Activated T-helper 2 cell treated with anti-CD3 and anti-CD28 coated beads, Interferon-gamma antibody, Interleukin-2, Interleukin-4, amounts not matched to agents 10 μg/mL and 5 μg/mL and 100 μg/mL, durations not matched to agents 14 hours and 24 hours and 36 hours (primary cell): ENCODE measurements at regions of chr5 and their contacts with region 1.

Region 1: DNA sequence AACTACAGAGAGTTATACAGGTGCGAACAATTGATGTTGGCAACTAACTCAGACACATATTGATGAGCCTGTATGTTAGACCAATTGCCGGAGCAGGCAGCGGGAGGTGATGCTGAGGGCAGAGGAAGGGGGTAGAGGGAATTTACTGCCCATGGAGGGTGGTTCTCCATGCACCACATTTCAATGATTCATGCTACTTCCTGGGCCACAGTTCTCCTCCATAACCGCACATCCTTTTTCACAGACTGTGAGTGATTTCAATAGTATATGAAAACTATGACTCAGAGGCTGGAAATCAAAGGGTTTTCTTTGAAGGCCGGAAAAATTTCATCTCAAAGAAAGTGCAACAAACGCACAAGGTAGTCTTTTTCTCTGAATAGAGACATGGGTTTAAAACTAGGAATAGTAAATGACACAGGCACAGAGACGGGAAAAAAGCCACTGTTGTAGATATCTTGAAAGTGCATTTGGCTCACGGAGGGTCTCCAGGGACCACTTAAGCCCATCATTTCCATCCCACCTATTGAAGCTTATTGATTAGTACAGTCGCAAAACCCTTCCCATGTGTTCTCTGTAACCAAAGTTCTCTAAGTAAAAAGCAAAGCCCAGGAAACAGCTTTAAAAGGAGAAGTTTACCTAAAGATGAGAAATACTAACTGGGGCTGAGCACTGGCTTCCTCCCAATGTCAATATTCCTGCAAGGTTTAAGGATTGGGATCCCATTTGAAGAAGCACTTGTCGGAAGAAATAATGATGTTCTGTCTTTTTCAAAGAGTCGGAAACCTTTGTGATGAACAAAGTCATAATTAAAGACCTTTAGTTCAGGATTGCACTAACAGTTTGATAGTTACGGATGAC is 28.0 kb upstream of the ADAM19 start:
- DNase-seq: peak; percentile 75
- H3K4me3 Mint-ChIP-seq: peak overlapping the region; percentile 52
- H3K27ac Mint-ChIP-seq: peak overlapping the region; percentile 80
- H3K4me1 Mint-ChIP-seq: peaks cover 79% of the 10 kb centered on the region
- H3K27me3 Mint-ChIP-seq: no peaks in the 10 kb centered on the region

Region 2: GRCh38 chr5:157172403-157172802 is 431.2 kb before region 1 on chr5:
- intact Hi-C with region 1: loop called (anchors 5 kb)
- DNase-seq: peak; percentile 78
- H3K4me3 Mint-ChIP-seq: peak overlapping the region; percentile 73
- H3K27ac Mint-ChIP-seq: peak overlapping the region; percentile 98
- H3K4me1 Mint-ChIP-seq: peaks cover 72% of the 10 kb centered on the region
- H3K27me3 Mint-ChIP-seq: no peaks in the 10 kb centered on the region

Region 3: GRCh38 chr5:157548513-157549297 is 54.9 kb before region 1 on chr5:
- intact Hi-C with region 1: no loop called
- DNase-seq: no peak
- H3K4me3 Mint-ChIP-seq: peak overlapping the region; percentile 66
- H3K27ac Mint-ChIP-seq: peak overlapping the region; percentile 78
- H3K4me1 Mint-ChIP-seq: peaks cover 82% of the 10 kb centered on the region
- H3K27me3 Mint-ChIP-seq: no peaks in the 10 kb centered on the region

Region 4: DNA sequence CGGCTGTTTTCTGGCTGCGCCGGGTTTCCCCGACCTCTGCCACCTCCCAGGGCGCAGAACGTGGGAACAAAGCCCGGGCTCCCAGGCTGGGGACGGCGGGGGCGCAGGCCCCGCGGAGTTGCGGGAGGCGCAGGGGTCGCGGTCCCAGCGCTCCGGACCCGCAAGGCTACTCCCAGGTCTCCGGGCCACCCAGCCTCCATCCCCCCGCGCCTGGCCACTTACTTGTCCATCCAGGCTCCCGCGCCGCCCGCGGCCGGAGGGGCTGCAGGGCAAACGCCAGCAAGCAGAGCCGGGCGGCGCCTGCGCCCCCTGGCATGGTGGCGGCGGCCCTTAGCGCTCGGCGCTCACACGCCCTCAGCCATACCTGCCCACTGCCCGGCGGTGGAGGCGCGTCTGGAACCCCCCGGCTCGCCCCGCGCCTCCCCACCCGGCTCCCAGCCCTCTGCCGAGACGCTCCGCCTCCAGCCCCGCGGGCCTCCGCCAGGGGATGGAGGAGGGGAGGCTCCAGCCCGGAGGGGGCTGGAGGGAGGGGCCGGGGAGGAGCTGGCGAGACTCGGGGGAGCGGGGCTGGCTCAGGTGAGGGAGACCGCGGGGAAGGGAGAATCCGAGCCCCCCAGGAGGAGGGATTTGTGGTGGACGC is 28.1 kb before region 1 on chr5 and contains the start of gene ADAM19:
- intact Hi-C with region 1: loop called (anchors 1 kb)
- DNase-seq: peak; percentile 43
- H3K4me3 Mint-ChIP-seq: peak within 1 kb of the TSS; percentile 94
- H3K27ac Mint-ChIP-seq: peak within 1 kb of the TSS; percentile 84
- H3K4me1 Mint-ChIP-seq: peaks cover 62% of the 10 kb centered on the region
- H3K27me3 Mint-ChIP-seq: no peaks in the 10 kb centered on the region
- total RNA-seq, gene ADAM19: 229 and 237 TPM in 2 replicates

Region 5: GRCh38 chr5:157670662-157671591 is 67.4 kb after region 1 on chr5 and contains the start of gene C5orf52:
- intact Hi-C with region 1: loop called (anchors 2 kb)
- DNase-seq: no peak
- H3K4me3 Mint-ChIP-seq: peak within 1 kb of the TSS; percentile 90
- H3K27ac Mint-ChIP-seq: peak within 1 kb of the TSS; percentile 74
- H3K4me1 Mint-ChIP-seq: peaks cover 28% of the 10 kb centered on the region
- H3K27me3 Mint-ChIP-seq: peaks cover 8% of the 10 kb centered on the region
- total RNA-seq, gene C5orf52: 0.30 TPM in 1 of 2 replicates, not detected in the other

Region 6: DNA sequence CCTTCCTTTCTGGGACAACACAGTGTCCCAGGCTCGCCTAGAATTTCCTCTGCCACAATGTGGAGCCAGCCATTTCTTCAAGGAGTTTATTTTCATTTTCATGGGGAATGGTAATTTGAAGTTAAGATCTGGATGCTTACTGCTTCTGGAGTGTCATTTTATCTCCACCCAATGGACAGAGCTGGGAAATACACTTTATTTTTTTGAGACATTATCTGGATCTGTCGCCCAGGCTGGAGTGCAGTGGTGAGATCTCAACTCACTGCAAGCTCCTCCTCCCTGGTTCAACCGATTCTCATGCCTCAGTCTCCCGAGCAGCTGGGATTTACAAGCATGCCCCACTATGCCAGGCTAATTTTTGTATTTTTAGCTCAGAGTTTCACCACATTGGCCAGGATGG is 115.0 kb after region 1 on chr5:
- intact Hi-C with region 1: loop called (anchors 5 kb)
- DNase-seq: no peak
- H3K4me3 Mint-ChIP-seq: no peak overlapping the region
- H3K27ac Mint-ChIP-seq: peak overlapping the region; percentile 67
- H3K4me1 Mint-ChIP-seq: peaks cover 33% of the 10 kb centered on the region
- H3K27me3 Mint-ChIP-seq: no peaks in the 10 kb centered on the region

Region 7: DNA sequence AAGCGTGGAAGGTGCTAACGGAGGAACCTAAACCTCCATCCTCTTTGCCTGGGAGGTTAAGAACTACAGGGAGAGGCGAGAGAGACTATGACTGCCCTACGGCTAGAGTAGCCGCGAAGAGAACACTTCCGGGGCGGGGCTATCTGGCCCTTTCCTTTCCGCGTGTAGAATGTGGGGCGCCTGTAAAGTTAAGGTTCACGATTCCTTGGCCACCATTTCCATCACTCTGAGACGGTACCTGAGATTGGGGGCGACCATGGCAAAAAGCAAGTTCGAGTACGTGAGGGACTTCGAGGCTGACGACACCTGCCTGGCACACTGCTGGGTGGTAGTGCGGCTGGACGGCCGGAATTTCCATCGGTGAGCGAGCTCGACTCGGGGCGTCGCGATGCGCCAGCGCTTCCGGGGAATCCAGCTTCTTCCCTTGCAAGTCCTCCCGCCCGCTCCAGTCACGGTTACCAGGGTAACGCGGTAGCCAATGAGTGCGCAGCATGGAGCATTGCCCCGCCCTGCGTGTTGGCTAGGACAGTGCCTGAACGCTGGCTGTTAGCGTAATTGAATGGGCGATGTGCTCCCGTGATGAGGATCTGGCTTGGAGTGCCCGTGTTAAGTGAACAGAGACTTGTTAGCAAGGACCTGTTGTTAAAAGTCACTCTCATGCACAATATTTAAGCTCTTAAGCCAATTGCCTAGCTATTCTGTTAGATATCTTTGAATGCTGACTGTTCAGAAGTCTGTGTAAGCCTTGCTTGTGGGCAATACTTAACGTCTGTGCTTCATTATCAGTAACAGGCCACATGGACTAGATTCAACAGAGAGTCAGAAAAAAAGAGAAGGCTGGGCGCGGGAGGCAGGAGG is 127.9 kb after region 1 on chr5 and contains the start of gene THG1L:
- intact Hi-C with region 1: loop called (anchors 2 kb)
- DNase-seq: peak; percentile 97
- H3K4me3 Mint-ChIP-seq: peak within 1 kb of the TSS; percentile 90
- H3K27ac Mint-ChIP-seq: peak within 1 kb of the TSS; percentile 95
- H3K4me1 Mint-ChIP-seq: peaks cover 26% of the 10 kb centered on the region
- H3K27me3 Mint-ChIP-seq: no peaks in the 10 kb centered on the region
- total RNA-seq, gene THG1L: 28.8 and 29.3 TPM in 2 replicates

Region 8: DNA sequence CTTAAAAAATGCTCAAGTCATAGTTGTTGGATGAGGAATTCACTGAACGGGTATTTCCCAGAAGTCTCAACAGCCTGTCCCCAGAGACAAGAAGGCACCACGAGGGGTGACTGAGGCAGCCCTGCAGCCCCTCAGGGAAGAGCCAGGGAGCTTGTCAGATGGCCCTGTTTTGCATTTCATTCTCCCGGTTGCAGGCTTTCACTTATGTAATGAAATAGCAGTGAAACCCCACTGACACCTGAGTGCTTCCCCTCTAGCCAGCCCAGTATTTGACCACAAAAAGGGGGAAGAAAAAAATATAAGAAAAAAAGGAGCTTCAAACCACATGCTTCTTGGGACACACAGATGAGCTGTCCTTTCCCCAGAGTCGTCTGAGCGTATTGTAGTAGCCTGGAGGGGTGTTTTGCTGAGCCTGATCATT is 1802.1 kb after region 1 on chr5:
- intact Hi-C with region 1: loop called (anchors 10 kb)
- DNase-seq: no peak
- H3K4me3 Mint-ChIP-seq: no peak overlapping the region
- H3K27ac Mint-ChIP-seq: no peak overlapping the region
- H3K4me1 Mint-ChIP-seq: peaks cover 22% of the 10 kb centered on the region
- H3K27me3 Mint-ChIP-seq: peaks cover 61% of the 10 kb centered on the region